ENCODE measurements at regions of chr19 and their contacts with region 1.

Region 1: DNA sequence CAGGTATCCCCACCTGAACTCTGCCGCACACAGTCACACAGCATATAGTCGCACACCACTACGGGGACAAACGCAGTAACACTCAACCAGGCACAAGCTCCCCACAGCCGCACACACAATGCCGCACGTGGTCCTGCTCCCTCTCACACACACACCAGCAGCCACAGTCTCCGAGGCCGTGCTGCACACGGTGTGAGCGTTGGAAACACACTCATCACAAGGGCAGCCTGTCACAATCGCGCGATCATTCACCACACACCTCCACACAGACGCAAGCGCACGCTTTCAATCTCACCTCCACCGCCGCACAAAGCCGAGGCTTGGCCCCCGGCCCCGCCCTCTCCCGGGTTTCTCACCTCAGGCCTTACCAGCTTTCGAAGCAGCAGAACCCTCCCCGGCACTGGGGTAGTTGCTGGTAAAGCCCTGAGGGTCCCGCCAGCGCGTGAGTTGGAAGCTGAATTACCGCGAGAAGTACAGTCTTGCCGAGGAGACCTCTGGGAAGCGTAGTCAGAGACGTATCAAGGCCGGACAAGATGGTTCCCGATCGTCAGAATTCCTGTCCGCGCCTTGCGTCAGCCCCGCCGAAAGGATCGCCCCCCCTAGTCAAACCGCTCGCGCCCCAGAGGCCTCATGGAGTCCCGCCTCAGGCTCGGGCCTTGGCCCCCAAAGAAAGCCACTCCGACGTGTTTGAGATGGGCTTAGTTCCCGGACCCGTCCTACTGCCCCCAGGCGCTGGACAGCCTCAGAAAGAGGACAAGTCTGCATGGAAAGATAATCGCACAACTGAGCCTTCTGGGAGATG is at the start of gene ZNF566:
- DNase-seq: peak; percentile 84 to 97 (median 89)
- ATAC-seq: peak; percentile 90
- H3K4me3 ChIP-seq: peak within 1 kb of the TSS; percentile 64
- H3K4me3 Mint-ChIP-seq: peak within 1 kb of the TSS; percentile 97
- H3K27ac ChIP-seq: peak within 1 kb of the TSS; percentile 84 to 87
- H3K27ac Mint-ChIP-seq: peak within 1 kb of the TSS; percentile 99
- H3K4me1 ChIP-seq: peaks cover 19% of the 10 kb centered on the region
- H3K4me1 Mint-ChIP-seq: peaks cover 36% of the 10 kb centered on the region
- H3K27me3 ChIP-seq: no peaks in the 10 kb centered on the region
- H3K27me3 Mint-ChIP-seq: no peaks in the 10 kb centered on the region
- CTCF ChIP-seq: no peak
- total RNA-seq, gene ZNF566: 6.3 to 6.8 TPM

Region 2: DNA sequence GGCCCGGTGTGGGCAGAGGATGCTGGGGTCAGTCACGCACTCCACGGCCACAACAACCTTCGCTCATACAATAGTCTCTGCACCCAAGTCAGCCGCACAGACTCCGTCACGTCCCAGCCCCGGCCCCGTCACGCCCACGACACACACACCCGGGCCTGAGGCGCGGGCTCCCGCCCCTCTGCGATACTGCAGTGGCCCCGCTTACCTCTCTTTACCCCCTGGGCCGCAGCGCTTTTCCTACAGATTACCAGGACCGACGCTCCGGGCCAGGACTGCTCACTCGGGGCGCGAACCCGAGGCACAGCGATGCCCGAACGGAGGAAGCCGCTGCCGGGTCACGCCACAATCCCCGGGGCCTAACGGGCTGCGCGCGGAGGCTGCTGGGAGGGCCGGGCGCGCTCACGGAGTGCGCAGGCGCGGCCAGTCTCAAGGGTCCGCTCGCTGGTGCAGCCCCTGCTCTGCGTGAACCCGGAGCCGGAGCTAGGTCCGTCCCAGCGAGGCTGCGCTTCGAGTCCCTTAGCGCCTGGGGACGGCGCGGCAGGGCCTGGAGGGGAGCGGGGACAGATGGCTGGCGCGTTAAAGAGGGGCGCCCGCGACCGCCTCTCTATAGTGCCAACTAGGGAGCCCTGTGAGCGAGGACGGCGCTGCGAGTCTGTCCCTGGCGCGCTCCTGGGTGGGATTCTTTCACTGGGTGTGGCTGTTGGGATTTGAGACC is 70.9 kb before region 1 on chr19 and contains the start of gene ZFP82:
- CTCF ChIA-PET with region 1: no interaction called
- POLR2A ChIA-PET with region 1: interaction called, 17 read pairs
- intact Hi-C with region 1: loop called (anchors 2 kb)
- DNase-seq: peak; percentile 54 to 86 (median 70)
- ATAC-seq: peak; percentile 86
- H3K4me3 ChIP-seq: peak within 1 kb of the TSS; percentile 93
- H3K4me3 Mint-ChIP-seq: peak within 1 kb of the TSS; percentile 95
- H3K27ac ChIP-seq: peak within 1 kb of the TSS; percentile 51 to 78
- H3K27ac Mint-ChIP-seq: peak within 1 kb of the TSS; percentile 93
- H3K4me1 ChIP-seq: peaks cover 19% of the 10 kb centered on the region
- H3K4me1 Mint-ChIP-seq: peaks cover 27% of the 10 kb centered on the region
- H3K27me3 ChIP-seq: peaks cover 16 to 23% of the 10 kb centered on the region in 2 experiments
- H3K27me3 Mint-ChIP-seq: peaks cover 29% of the 10 kb centered on the region
- CTCF ChIP-seq: no peak
- total RNA-seq, gene ZFP82: 3.4 to 3.8 TPM

Region 3: GRCh38 chr19:36441339-36441738 is 48.0 kb before region 1 on chr19:
- CTCF ChIA-PET with region 1: no interaction called
- POLR2A ChIA-PET with region 1: no interaction called
- intact Hi-C with region 1: no loop called
- DNase-seq: no peak
- ATAC-seq: no peak
- H3K4me3 ChIP-seq: no peak overlapping the region
- H3K4me3 Mint-ChIP-seq: no peak overlapping the region
- H3K27ac ChIP-seq: no peak overlapping the region
- H3K27ac Mint-ChIP-seq: no peak overlapping the region
- H3K4me1 ChIP-seq: no peaks in the 10 kb centered on the region
- H3K4me1 Mint-ChIP-seq: no peaks in the 10 kb centered on the region
- H3K27me3 ChIP-seq: no peaks in the 10 kb centered on the region
- H3K27me3 Mint-ChIP-seq: no peaks in the 10 kb centered on the region
- CTCF ChIP-seq: no peak

Region 4: GRCh38 chr19:36573020-36573885 is 83.9 kb after region 1 on chr19 and contains the start of gene ZNF529:
- CTCF ChIA-PET with region 1: no interaction called
- POLR2A ChIA-PET with region 1: interaction called, 20 read pairs
- intact Hi-C with region 1: loop called (anchors 2 kb)
- DNase-seq: peak; percentile 69 to 94 (median 78)
- ATAC-seq: peak; percentile 92
- H3K4me3 ChIP-seq: peak within 1 kb of the TSS; percentile 88
- H3K4me3 Mint-ChIP-seq: peak within 1 kb of the TSS; percentile 94
- H3K27ac ChIP-seq: peak within 1 kb of the TSS; percentile 89 to 97
- H3K27ac Mint-ChIP-seq: peak within 1 kb of the TSS; percentile 93
- H3K4me1 ChIP-seq: peaks cover 25% of the 10 kb centered on the region
- H3K4me1 Mint-ChIP-seq: peaks cover 39% of the 10 kb centered on the region
- H3K27me3 ChIP-seq: no peaks in the 10 kb centered on the region
- H3K27me3 Mint-ChIP-seq: no peaks in the 10 kb centered on the region
- CTCF ChIP-seq: no peak
- total RNA-seq, gene ZNF529: 39.6 to 42.7 TPM

Region 5: GRCh38 chr19:36605101-36605876 is 116.0 kb after region 1 on chr19 and contains the start of gene ZNF382:
- CTCF ChIA-PET with region 1: interaction called, 6 read pairs
- POLR2A ChIA-PET with region 1: interaction called, 29 read pairs
- intact Hi-C with region 1: loop called in 1 of 2 experiments (anchors 2 kb)
- DNase-seq: peak; percentile 74 to 92 (median 85)
- ATAC-seq: peak; percentile 75
- H3K4me3 ChIP-seq: peak within 1 kb of the TSS; percentile 87
- H3K4me3 Mint-ChIP-seq: peak within 1 kb of the TSS; percentile 85
- H3K27ac ChIP-seq: peak within 1 kb of the TSS; percentile 92 to 95
- H3K27ac Mint-ChIP-seq: peak within 1 kb of the TSS; percentile 83
- H3K4me1 ChIP-seq: peaks cover 10% of the 10 kb centered on the region
- H3K4me1 Mint-ChIP-seq: peaks cover 28% of the 10 kb centered on the region
- H3K27me3 ChIP-seq: no peaks in the 10 kb centered on the region
- H3K27me3 Mint-ChIP-seq: no peaks in the 10 kb centered on the region
- CTCF ChIP-seq: no peak
- total RNA-seq, gene ZNF382: 4.2 to 4.4 TPM

Region 6: GRCh38 chr19:37506387-37507166 is 1017.3 kb after region 1 on chr19 and contains the start of gene ZNF793:
- CTCF ChIA-PET with region 1: no interaction called
- POLR2A ChIA-PET with region 1: interaction called, 11 read pairs
- intact Hi-C with region 1: no loop called
- DNase-seq: peak; percentile 68 to 92 (median 78)
- ATAC-seq: peak; percentile 85
- H3K4me3 ChIP-seq: peak within 1 kb of the TSS; percentile 68
- H3K4me3 Mint-ChIP-seq: no peak within 1 kb of the TSS
- H3K27ac ChIP-seq: peak within 1 kb of the TSS; percentile 88 to 92
- H3K27ac Mint-ChIP-seq: no peak within 1 kb of the TSS
- H3K4me1 ChIP-seq: peaks cover 20% of the 10 kb centered on the region
- H3K4me1 Mint-ChIP-seq: no peaks in the 10 kb centered on the region
- H3K27me3 ChIP-seq: no peaks in the 10 kb centered on the region
- H3K27me3 Mint-ChIP-seq: no peaks in the 10 kb centered on the region
- CTCF ChIP-seq: no peak
- total RNA-seq, gene ZNF793: 2.3 TPM